CD14-positive monocyte (primary cell): ENCODE measurements at regions of chr16 and their contacts with region 1.

Region 1: GRCh38 chr16:73154063-73154870 is 106.3 kb upstream of the ZFHX3 start:
- DNase-seq: peak; percentile 91 to 95 (median 93)
- H3K4me3 ChIP-seq: peak overlapping the region in 1 of 3 experiments; percentile 35
- H3K4me3 Mint-ChIP-seq: peak overlapping the region; percentile 16 to 64
- H3K27ac ChIP-seq: peak overlapping the region; percentile 84 to 92
- H3K27ac Mint-ChIP-seq: peak overlapping the region; percentile 93 to 98 (median 97)
- H3K4me1 ChIP-seq: peaks cover 65 to 66% of the 10 kb centered on the region in 2 donors
- H3K4me1 Mint-ChIP-seq: peaks cover 69% of the 10 kb centered on the region
- H3K27me3 ChIP-seq: no peaks in the 10 kb centered on the region
- H3K27me3 Mint-ChIP-seq: peaks cover 0 to 2% (median 2%) of the 10 kb centered on the region in 3 donors
- CTCF ChIP-seq: no peak

Region 2: GRCh38 chr16:73086108-73086507 is 68.2 kb before region 1 on chr16:
- intact Hi-C with region 1: loop called in 1 of 2 experiments (anchors 5 kb)
- DNase-seq: peak; percentile 79 to 92 (median 92)
- H3K4me3 ChIP-seq: peak overlapping the region in 1 of 3 experiments; percentile 42
- H3K4me3 Mint-ChIP-seq: peak overlapping the region in 1 of 2 donors; percentile 59
- H3K27ac ChIP-seq: peak overlapping the region in 1 of 2 donors; percentile 80
- H3K27ac Mint-ChIP-seq: peak overlapping the region; percentile 80 to 91 (median 85)
- H3K4me1 ChIP-seq: peaks cover 34 to 46% of the 10 kb centered on the region in 2 donors
- H3K4me1 Mint-ChIP-seq: peaks cover 33% of the 10 kb centered on the region
- H3K27me3 ChIP-seq: no peaks in the 10 kb centered on the region
- H3K27me3 Mint-ChIP-seq: peaks cover 2 to 3% (median 3%) of the 10 kb centered on the region in 3 donors
- CTCF ChIP-seq: no peak

Region 3: GRCh38 chr16:73122604-73123391 is 31.5 kb before region 1 on chr16:
- intact Hi-C with region 1: loop called in 1 of 2 experiments (anchors 5 kb)
- DNase-seq: peak; percentile 44 to 56 (median 47)
- H3K4me3 ChIP-seq: peak overlapping the region in 1 of 3 experiments; percentile 51
- H3K4me3 Mint-ChIP-seq: peak overlapping the region; percentile 42 to 83
- H3K27ac ChIP-seq: peak overlapping the region; percentile 85 to 92
- H3K27ac Mint-ChIP-seq: peak overlapping the region; percentile 88 to 98 (median 95)
- H3K4me1 ChIP-seq: peaks cover 55 to 56% of the 10 kb centered on the region in 2 donors
- H3K4me1 Mint-ChIP-seq: peaks cover 59% of the 10 kb centered on the region
- H3K27me3 ChIP-seq: no peaks in the 10 kb centered on the region
- H3K27me3 Mint-ChIP-seq: peaks cover 0 to 5% (median 3%) of the 10 kb centered on the region in 3 donors
- CTCF ChIP-seq: no peak

Region 4: GRCh38 chr16:73265124-73265838 is 111.0 kb after region 1 on chr16:
- intact Hi-C with region 1: no loop called
- DNase-seq: no peak
- H3K4me3 ChIP-seq: no peak overlapping the region
- H3K4me3 Mint-ChIP-seq: no peak overlapping the region
- H3K27ac ChIP-seq: no peak overlapping the region
- H3K27ac Mint-ChIP-seq: no peak overlapping the region
- H3K4me1 ChIP-seq: no peaks in the 10 kb centered on the region
- H3K4me1 Mint-ChIP-seq: no peaks in the 10 kb centered on the region
- H3K27me3 ChIP-seq: no peaks in the 10 kb centered on the region
- H3K27me3 Mint-ChIP-seq: peaks cover 0 to 2% (median 1%) of the 10 kb centered on the region in 3 donors
- CTCF ChIP-seq: no peak

Region 5: GRCh38 chr16:73369851-73370250 is 215.6 kb after region 1 on chr16:
- intact Hi-C with region 1: no loop called
- DNase-seq: no peak
- H3K4me3 ChIP-seq: no peak overlapping the region
- H3K4me3 Mint-ChIP-seq: no peak overlapping the region
- H3K27ac ChIP-seq: no peak overlapping the region
- H3K27ac Mint-ChIP-seq: no peak overlapping the region
- H3K4me1 ChIP-seq: no peaks in the 10 kb centered on the region
- H3K4me1 Mint-ChIP-seq: no peaks in the 10 kb centered on the region
- H3K27me3 ChIP-seq: no peaks in the 10 kb centered on the region
- H3K27me3 Mint-ChIP-seq: peaks cover 0 to 2% (median 0%) of the 10 kb centered on the region in 3 donors
- CTCF ChIP-seq: no peak